Thyroid gland (tissue), 4 donors: ENCODE measurements at regions of chr9 and their contacts with region 1.

Region 1: DNA sequence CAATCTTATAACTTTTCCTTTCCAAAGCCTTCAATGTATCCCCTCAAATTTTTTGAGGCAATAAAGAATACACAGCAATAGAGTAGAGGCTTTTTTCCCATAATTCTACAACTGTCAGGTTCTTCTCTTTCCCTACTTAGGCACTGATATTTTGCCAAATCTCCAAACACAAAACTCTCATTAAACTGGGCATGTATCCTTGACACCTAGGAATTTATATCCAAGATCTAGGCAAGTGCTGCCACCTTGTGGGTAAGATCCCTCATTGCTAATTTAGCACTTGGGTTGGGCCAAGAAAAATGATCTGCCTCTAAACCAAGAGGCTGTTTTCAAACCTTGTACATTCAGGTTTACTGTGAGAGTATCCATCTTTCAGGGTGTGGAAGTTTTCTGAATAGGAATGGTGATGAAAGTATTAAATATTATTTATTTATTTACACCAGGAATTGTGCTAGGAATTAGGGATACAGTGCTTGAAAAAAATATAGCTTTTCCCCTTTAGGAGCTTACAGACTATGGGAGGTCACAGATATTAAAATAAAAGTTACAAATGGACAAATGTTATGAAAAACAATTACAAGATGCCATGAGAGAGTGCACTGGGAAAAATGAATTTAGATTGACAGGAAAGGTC is 17.6 kb downstream of the TSTD2 start:
- DNase-seq: peak; percentile 77 to 78
- H3K4me3 ChIP-seq: no peak overlapping the region
- H3K27ac ChIP-seq: peak overlapping the region in 1 of 3 donors; percentile 35
- H3K4me1 ChIP-seq: peaks cover 0 to 6% of the 10 kb centered on the region in 2 donors
- H3K27me3 ChIP-seq: no peaks in the 10 kb centered on the region
- CTCF ChIP-seq: peak; percentile 40 to 97 (median 84)
- POLR2A ChIP-seq: no peak

Region 2: DNA sequence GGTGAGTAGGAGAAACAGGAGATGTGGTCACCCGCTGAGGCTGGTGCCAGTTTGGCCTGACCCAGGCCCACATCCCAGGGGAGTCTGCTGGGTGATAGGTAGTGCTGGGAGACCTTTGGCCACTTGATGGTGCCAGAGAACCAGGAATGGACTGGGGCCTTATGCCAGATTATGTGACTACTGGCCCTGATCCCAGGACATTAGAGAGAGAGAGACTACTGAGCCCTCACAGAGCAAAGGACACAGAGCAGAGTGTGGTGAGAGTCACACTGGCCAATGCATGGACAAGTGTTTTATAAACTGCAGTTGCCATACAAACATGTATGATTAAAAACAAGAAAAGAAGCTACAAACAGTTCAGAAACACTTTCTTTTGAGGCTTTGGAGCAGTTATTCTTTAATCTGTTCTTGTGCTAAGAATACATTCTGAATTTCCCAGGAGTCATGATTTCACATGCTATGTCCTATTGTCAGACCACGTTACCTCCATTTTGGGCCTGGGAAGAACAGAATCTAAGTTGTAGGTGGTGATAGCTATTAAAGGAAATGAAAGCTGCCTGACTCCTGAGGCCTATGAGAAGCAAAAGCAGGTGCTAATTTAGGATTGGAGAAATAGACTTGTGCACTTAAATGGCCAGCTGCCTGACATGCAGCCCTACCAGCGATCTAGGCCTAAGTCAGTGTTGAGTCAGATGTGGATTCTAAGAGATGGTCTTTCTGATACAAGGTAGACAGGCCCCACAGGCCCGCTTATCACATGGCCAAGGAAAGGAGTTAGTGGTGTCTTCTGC is 146.7 kb before region 1 on chr9:
- intact Hi-C with region 1: loop called (anchors 2 kb)
- DNase-seq: peak; percentile 86 to 87
- H3K4me3 ChIP-seq: no peak overlapping the region
- H3K27ac ChIP-seq: peak overlapping the region; percentile 67 to 85 (median 78)
- H3K4me1 ChIP-seq: peaks cover 7 to 8% of the 10 kb centered on the region in 2 donors
- H3K27me3 ChIP-seq: no peaks in the 10 kb centered on the region
- CTCF ChIP-seq: peak; percentile 53 to 99 (median 86)
- POLR2A ChIP-seq: peak in 1 of 2 donors; percentile 39

Region 3: DNA sequence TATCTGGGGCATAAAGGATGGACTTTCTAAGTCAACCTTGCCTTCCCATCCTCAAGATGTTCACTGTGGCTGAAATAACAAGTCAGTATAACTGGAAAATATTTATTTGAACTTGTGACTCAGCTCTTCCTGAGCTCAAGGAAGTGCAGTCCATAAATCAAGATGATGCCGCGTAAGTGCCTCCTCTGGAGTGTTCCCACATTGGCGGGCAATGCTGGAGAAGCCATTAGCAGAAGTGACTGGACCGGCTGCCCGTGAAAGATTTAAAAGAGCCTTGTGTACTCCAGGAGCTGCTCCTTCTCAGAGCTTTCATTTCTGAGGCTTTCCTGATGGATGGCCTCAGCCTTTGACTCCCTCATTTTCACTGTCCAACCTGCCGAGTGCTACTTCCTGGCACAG is 96.6 kb before region 1 on chr9:
- intact Hi-C with region 1: no loop called
- DNase-seq: peak; percentile 44 to 45
- H3K4me3 ChIP-seq: no peak overlapping the region
- H3K27ac ChIP-seq: peak overlapping the region in 1 of 3 donors; percentile 41
- H3K4me1 ChIP-seq: peaks cover 0 to 39% of the 10 kb centered on the region in 2 donors
- H3K27me3 ChIP-seq: no peaks in the 10 kb centered on the region
- CTCF ChIP-seq: no peak
- POLR2A ChIP-seq: no peak